CD4-positive, alpha-beta T cell (primary cell): ENCODE measurements at regions of chr2 and their contacts with region 1.

Region 1: GRCh38 chr2:171487803-171488259 is 34.4 kb upstream of the CYBRD1 start:
- DNase-seq: no peak
- ATAC-seq: no peak
- H3K4me3 ChIP-seq: no peak overlapping the region
- H3K4me3 Mint-ChIP-seq: no peak overlapping the region
- H3K27ac ChIP-seq: no peak overlapping the region
- H3K27ac Mint-ChIP-seq: no peak overlapping the region
- H3K4me1 ChIP-seq: no peaks in the 10 kb centered on the region
- H3K4me1 Mint-ChIP-seq: peaks cover 9% of the 10 kb centered on the region
- H3K27me3 ChIP-seq: no peaks in the 10 kb centered on the region
- H3K27me3 Mint-ChIP-seq: no peaks in the 10 kb centered on the region
- CTCF ChIP-seq: no peak

Region 2: DNA sequence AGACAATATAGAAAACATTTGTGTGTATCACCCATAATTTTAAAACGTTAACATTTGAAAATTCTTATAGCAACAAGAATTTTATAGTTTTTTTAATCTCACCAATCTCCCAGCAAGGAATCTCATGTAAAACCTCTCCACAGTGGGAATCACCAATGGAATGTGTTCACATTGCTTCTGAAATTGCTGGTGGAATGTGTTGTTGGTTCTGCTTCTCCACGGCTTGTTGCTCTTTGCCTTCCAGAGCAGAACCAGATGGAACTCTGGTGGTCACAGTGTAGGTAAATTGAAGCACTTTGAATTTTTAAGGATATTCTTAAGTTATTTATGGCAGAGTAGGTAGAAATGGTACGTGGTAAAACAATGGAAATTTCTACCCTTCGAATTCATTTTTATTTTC is 18.7 kb before region 1 on chr2:
- CTCF ChIA-PET with region 1: no interaction called
- POLR2A ChIA-PET with region 1: no interaction called
- intact Hi-C with region 1: no loop called
- DNase-seq: no peak
- ATAC-seq: no peak
- H3K4me3 ChIP-seq: no peak overlapping the region
- H3K4me3 Mint-ChIP-seq: no peak overlapping the region
- H3K27ac ChIP-seq: no peak overlapping the region
- H3K27ac Mint-ChIP-seq: no peak overlapping the region
- H3K4me1 ChIP-seq: no peaks in the 10 kb centered on the region
- H3K4me1 Mint-ChIP-seq: no peaks in the 10 kb centered on the region
- H3K27me3 ChIP-seq: no peaks in the 10 kb centered on the region
- H3K27me3 Mint-ChIP-seq: no peaks in the 10 kb centered on the region
- CTCF ChIP-seq: no peak

Region 3: GRCh38 chr2:171598713-171599319 is 111.0 kb after region 1 on chr2:
- CTCF ChIA-PET with region 1: no interaction called
- POLR2A ChIA-PET with region 1: no interaction called
- intact Hi-C with region 1: no loop called
- DNase-seq: peak in 12 of 14 experiments; percentile 1 to 75 (median 28)
- ATAC-seq: peak; percentile 92
- H3K4me3 ChIP-seq: no peak overlapping the region
- H3K4me3 Mint-ChIP-seq: no peak overlapping the region
- H3K27ac ChIP-seq: no peak overlapping the region
- H3K27ac Mint-ChIP-seq: no peak overlapping the region
- H3K4me1 ChIP-seq: no peaks in the 10 kb centered on the region
- H3K4me1 Mint-ChIP-seq: peaks cover 6% of the 10 kb centered on the region
- H3K27me3 ChIP-seq: no peaks in the 10 kb centered on the region
- H3K27me3 Mint-ChIP-seq: no peaks in the 10 kb centered on the region
- CTCF ChIP-seq: peak; percentile 92

Region 4: GRCh38 chr2:171669121-171669520 is 181.3 kb after region 1 on chr2:
- CTCF ChIA-PET with region 1: no interaction called
- POLR2A ChIA-PET with region 1: no interaction called
- intact Hi-C with region 1: loop called in 1 of 2 experiments (anchors 5 kb)
- DNase-seq: no peak
- ATAC-seq: no peak
- H3K4me3 ChIP-seq: no peak overlapping the region
- H3K4me3 Mint-ChIP-seq: no peak overlapping the region
- H3K27ac ChIP-seq: no peak overlapping the region
- H3K27ac Mint-ChIP-seq: no peak overlapping the region
- H3K4me1 ChIP-seq: no peaks in the 10 kb centered on the region
- H3K4me1 Mint-ChIP-seq: no peaks in the 10 kb centered on the region
- H3K27me3 ChIP-seq: no peaks in the 10 kb centered on the region
- H3K27me3 Mint-ChIP-seq: no peaks in the 10 kb centered on the region
- CTCF ChIP-seq: no peak

Region 5: DNA sequence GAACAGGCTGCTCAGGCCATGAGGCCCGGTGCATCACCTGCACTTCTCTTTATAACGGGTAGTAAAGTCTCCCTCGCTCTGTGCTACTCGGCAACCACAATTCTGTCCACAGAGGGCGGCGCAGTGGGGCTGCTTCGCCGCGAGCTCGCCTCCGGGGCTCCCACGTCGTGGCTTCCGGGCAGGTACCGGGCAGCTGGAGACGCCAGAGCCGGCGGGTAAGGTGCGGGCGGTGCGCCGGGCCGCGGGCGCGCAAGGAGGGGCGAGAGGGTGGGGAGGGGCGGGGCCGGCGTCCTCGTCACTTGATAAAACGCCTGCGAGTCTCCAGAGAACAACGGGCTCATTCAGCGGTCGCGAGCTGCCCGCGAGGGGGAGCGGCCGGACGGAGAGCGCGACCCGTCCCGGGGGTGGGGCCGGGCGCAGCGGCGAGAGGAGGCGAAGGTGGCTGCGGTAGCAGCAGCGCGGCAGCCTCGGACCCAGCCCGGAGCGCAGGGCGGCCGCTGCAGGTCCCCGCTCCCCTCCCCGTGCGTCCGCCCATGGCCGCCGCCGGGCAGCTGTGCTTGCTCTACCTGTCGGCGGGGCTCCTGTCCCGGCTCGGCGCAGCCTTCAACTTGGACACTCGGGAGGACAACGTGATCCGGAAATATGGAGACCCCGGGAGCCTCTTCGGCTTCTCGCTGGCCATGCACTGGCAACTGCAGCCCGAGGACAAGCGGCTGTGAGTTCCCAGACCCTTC is 939.6 kb after region 1 on chr2 and contains the start of gene ITGA6:
- CTCF ChIA-PET with region 1: no interaction called
- POLR2A ChIA-PET with region 1: no interaction called
- intact Hi-C with region 1: no loop called
- DNase-seq: peak; percentile 65 to 91 (median 72)
- ATAC-seq: peak; percentile 73
- H3K4me3 ChIP-seq: peak within 1 kb of the TSS; percentile 78
- H3K4me3 Mint-ChIP-seq: peak within 1 kb of the TSS; percentile 93
- H3K27ac ChIP-seq: peak within 1 kb of the TSS; percentile 13 to 74
- H3K27ac Mint-ChIP-seq: peak within 1 kb of the TSS; percentile 89
- H3K4me1 ChIP-seq: peaks cover 51% of the 10 kb centered on the region
- H3K4me1 Mint-ChIP-seq: peaks cover 45% of the 10 kb centered on the region
- H3K27me3 ChIP-seq: no peaks in the 10 kb centered on the region
- H3K27me3 Mint-ChIP-seq: no peaks in the 10 kb centered on the region
- CTCF ChIP-seq: no peak
- total RNA-seq, gene ITGA6: 53.5 to 58.0 TPM